Right ventricle myocardium superior (tissue), 1 donor: ENCODE measurements at regions of chr7 and their contacts with region 1.

Region 1: GRCh38 chr7:92833024-92833765 is 3.2 kb downstream of the CDK6 start:
- DNase-seq: peak; percentile 91
- ATAC-seq: peak; percentile 84

Region 2: GRCh38 chr7:92621026-92621540 is 212.1 kb before region 1 on chr7:
- intact Hi-C with region 1: loop called (anchors 5 kb)
- DNase-seq: no peak
- ATAC-seq: peak; percentile 89

Region 3: DNA sequence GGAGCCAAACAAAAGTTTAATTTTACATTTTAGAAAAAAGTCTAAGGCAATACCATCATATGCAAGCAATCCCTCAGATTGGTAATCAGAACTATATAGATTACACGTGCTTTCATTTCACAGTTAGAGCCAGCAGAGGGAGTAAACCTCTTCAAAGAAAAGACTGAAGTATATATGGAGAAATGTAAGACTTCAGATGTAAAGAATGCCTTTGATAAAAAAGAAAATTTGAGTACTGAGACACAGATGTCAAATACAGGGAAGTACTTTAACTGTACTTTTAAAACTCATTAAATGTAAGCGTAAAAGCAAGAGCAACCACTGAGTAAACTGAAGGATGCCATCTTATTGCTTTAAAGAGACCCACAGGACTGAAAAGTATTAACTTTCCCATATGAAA is 141.6 kb before region 1 on chr7:
- intact Hi-C with region 1: loop called (anchors 2 kb)
- DNase-seq: no peak
- ATAC-seq: no peak